ENCODE measurements at regions of chr19 and their contacts with region 1.

Region 1: GRCh38 chr19:49301165-49301865 is 23.7 kb downstream of the SLC6A16 start:
- DNase-seq: peak; percentile 68 to 96
- H3K4me3 ChIP-seq: no peak overlapping the region
- CTCF ChIP-seq: no peak
- POLR2A ChIP-seq: no peak

Region 2: GRCh38 chr19:48468775-48469288 is 832.5 kb before region 1 on chr19:
- intact Hi-C with region 1: loop called (anchors 5 kb)
- DNase-seq: peak; percentile 100
- H3K4me3 ChIP-seq: peak overlapping the region; percentile 88
- CTCF ChIP-seq: no peak
- POLR2A ChIP-seq: no peak

Region 3: GRCh38 chr19:49224856-49225255 is 76.5 kb before region 1 on chr19:
- intact Hi-C with region 1: loop called (anchors 5 kb)
- DNase-seq: no peak
- H3K4me3 ChIP-seq: no peak overlapping the region
- CTCF ChIP-seq: no peak
- POLR2A ChIP-seq: no peak